ENCODE measurements at regions of chr11 and their contacts with region 1.

Region 1: DNA sequence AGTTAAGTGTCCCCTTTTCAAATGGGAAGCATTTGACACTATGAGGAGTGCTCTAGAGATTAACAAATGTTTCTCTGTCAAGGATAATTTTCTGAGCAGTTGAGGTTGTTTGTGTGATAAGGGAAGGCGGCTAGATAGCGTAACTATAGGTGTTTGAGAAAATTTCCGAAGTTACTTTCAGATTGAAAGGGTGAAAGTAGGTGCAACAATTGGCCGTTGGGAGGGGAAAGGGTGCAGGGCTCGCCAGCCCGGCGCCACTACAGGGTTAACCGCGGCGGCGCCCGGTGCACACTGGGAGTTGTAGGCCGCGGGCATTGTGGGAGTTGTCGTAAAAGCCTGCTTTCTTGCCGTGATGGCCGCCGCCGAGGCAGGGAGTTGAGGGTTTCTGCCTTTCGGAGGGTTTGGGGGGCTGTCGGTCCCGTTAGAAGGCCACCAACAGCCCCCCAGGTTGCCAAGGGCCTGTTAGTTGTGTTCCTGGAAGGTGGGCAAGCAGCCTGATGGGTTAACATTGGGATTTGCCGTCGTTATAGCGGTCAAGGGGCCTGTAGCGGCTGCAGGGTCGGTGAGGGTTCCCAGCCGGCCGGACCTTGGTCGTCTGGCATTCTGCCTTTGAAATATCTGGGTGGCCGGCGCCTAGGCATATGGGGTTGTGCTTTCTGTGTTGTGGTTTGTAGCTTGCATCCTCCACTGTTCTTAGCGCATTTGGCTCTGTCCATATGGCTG is 36.5 kb upstream of the HSD17B12 start:
- DNase-seq: peak; percentile 84 to 87 (median 85)
- H3K4me3 ChIP-seq: peak overlapping the region; percentile 75 to 90
- H3K4me3 Mint-ChIP-seq: peak overlapping the region; percentile 88 to 97 (median 94)
- H3K27ac ChIP-seq: peak overlapping the region; percentile 71
- H3K27ac Mint-ChIP-seq: peak overlapping the region; percentile 82 to 95 (median 93)
- H3K4me1 ChIP-seq: peaks cover 17% of the 10 kb centered on the region
- H3K4me1 Mint-ChIP-seq: peaks cover 12 to 17% (median 15%) of the 10 kb centered on the region in 4 donors
- H3K27me3 ChIP-seq: peaks cover 9% of the 10 kb centered on the region
- H3K27me3 Mint-ChIP-seq: peaks cover 12 to 18% of the 10 kb centered on the region in 2 donors

Region 2: DNA sequence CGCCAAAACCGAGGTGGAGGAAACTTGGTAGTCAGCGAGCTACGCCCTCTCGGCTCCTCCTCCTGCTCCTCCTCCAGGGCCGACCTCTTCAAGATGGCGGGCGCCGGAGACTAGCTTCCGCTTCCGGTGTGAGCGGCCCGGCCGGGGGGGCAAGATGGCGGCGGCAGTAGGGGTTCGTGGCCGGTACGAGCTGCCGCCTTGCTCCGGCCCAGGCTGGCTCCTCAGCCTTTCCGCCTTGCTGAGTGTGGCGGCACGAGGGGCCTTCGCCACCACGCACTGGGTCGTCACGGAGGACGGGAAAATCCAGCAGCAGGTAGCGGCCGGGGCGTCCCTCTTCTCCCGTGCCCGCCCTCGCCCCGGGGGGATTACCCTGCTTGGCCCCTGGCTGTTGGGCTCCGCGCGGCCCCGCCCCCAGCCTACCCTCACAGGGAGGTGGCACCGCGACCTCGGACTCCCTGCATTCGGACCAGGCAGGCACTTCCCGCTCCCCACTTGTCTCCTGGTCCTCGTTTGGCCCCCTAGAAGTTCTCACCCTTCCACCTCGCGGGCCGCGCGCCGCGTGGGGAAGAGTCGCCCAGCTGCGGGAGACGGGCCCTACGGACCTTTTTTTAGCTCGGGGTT is 285.1 kb before region 1 on chr11 and contains the start of gene TTC17:
- CTCF ChIA-PET with region 1: no interaction called
- POLR2A ChIA-PET with region 1: no interaction called
- intact Hi-C with region 1: loop called (anchors 1 kb)
- DNase-seq: peak; percentile 89 to 95 (median 90)
- H3K4me3 ChIP-seq: peak within 1 kb of the TSS; percentile 51 to 89
- H3K4me3 Mint-ChIP-seq: peak within 1 kb of the TSS; percentile 94 to 100 (median 99)
- H3K27ac ChIP-seq: peak within 1 kb of the TSS; percentile 92
- H3K27ac Mint-ChIP-seq: peak within 1 kb of the TSS; percentile 96 to 99 (median 98)
- H3K4me1 ChIP-seq: peaks cover 32% of the 10 kb centered on the region
- H3K4me1 Mint-ChIP-seq: peaks cover 31 to 60% (median 47%) of the 10 kb centered on the region in 4 donors
- H3K27me3 ChIP-seq: no peaks in the 10 kb centered on the region
- H3K27me3 Mint-ChIP-seq: no peaks in the 10 kb centered on the region
- total RNA-seq, gene TTC17: 105 to 112 TPM

Region 3: GRCh38 chr11:43868852-43869567 is 225.0 kb after region 1 on chr11:
- CTCF ChIA-PET with region 1: no interaction called
- POLR2A ChIA-PET with region 1: no interaction called
- intact Hi-C with region 1: loop called (anchors 5 kb)
- DNase-seq: peak; percentile 48 to 62 (median 54)
- H3K4me3 ChIP-seq: no peak overlapping the region
- H3K4me3 Mint-ChIP-seq: peak overlapping the region; percentile 44 to 79 (median 66)
- H3K27ac ChIP-seq: peak overlapping the region; percentile 40
- H3K27ac Mint-ChIP-seq: peak overlapping the region; percentile 70 to 92 (median 83)
- H3K4me1 ChIP-seq: peaks cover 17% of the 10 kb centered on the region
- H3K4me1 Mint-ChIP-seq: peaks cover 11 to 23% (median 17%) of the 10 kb centered on the region in 4 donors
- H3K27me3 ChIP-seq: peaks cover 6% of the 10 kb centered on the region
- H3K27me3 Mint-ChIP-seq: peaks cover 10 to 25% of the 10 kb centered on the region in 2 donors